ENCODE measurements at regions of chr7 and their contacts with region 1.

Region 1: GRCh38 chr7:36670585-36671431 is 53.5 kb downstream of the AOAH start:
- DNase-seq: no peak
- H3K4me3 ChIP-seq: no peak overlapping the region
- CTCF ChIP-seq: peak; percentile 86

Region 2: DNA sequence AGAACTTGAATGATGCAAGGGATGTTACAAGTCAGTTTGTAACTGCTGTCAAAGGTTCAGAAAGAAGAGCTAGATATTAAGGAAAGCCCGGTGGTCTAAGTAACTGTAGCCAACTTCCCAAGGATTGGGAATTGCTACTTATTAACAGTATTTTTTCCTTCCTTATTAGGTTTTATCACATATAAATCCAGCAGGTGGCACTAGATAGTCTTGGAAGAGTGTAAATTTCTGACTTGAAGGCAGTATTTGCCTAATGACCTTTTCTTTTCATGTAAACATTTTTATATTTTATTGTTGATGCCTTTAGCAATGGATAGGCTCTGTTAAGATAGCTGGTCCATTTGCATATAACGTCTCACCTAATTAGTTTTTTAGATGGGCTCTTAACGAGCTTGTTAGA is 229.9 kb before region 1 on chr7:
- CTCF ChIA-PET with region 1: interaction called, 78 read pairs
- POLR2A ChIA-PET with region 1: no interaction called
- DNase-seq: no peak
- H3K4me3 ChIP-seq: no peak overlapping the region
- CTCF ChIP-seq: no peak

Region 3: GRCh38 chr7:36487756-36488336 is 183.0 kb before region 1 on chr7:
- CTCF ChIA-PET with region 1: interaction called, 178 read pairs
- POLR2A ChIA-PET with region 1: no interaction called
- DNase-seq: no peak
- H3K4me3 ChIP-seq: no peak overlapping the region
- CTCF ChIP-seq: peak; percentile 64

Region 4: GRCh38 chr7:36659172-36659516 is 11.7 kb before region 1 on chr7:
- CTCF ChIA-PET with region 1: interaction called, 43 read pairs
- POLR2A ChIA-PET with region 1: no interaction called
- DNase-seq: no peak
- H3K4me3 ChIP-seq: no peak overlapping the region
- CTCF ChIP-seq: no peak

Region 5: DNA sequence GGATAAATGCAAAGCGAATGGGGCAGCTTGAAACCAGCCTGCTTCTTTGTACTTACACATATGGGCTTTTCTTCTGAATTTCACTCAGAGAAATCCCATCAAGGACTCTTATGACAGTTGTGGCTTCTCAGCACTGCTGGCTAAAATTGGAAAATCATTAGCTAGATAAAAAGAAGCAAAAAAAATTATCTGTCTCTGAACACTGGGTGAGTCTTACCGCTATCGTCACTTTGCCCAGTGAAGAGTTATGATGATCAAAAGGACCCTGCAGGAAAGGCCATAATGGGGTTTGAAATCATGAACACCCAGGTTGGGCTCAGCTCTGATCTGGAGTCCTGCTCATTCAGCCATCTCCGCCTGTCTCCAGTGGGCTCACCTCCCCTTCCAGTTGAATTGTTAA is 19.2 kb after region 1 on chr7:
- CTCF ChIA-PET with region 1: interaction called, 13 read pairs
- POLR2A ChIA-PET with region 1: no interaction called
- DNase-seq: no peak
- H3K4me3 ChIP-seq: no peak overlapping the region
- CTCF ChIP-seq: no peak

Region 6: GRCh38 chr7:36723951-36724664 is 53.3 kb after region 1 on chr7 and contains the start of gene AOAH:
- CTCF ChIA-PET with region 1: no interaction called
- POLR2A ChIA-PET with region 1: no interaction called
- DNase-seq: no peak
- H3K4me3 ChIP-seq: no peak within 1 kb of the TSS
- CTCF ChIP-seq: no peak

Region 7: GRCh38 chr7:36775061-36775620 is 104.3 kb after region 1 on chr7:
- CTCF ChIA-PET with region 1: no interaction called
- POLR2A ChIA-PET with region 1: no interaction called
- DNase-seq: no peak
- H3K4me3 ChIP-seq: no peak overlapping the region
- CTCF ChIP-seq: no peak

Measured in AG04449 (cell line).